CD4-positive, alpha-beta memory T cell (primary cell): ENCODE measurements at regions of chr1 and their contacts with region 1.

Region 1: GRCh38 chr1:95116580-95117206 is 462 bp upstream of the TLCD4 start:
- DNase-seq: peak; percentile 39 to 61 (median 49)
- H3K4me3 ChIP-seq: peak overlapping the region; percentile 43 to 53
- H3K4me3 Mint-ChIP-seq: peak overlapping the region; percentile 90 to 93 (median 93)
- H3K27ac ChIP-seq: no peak overlapping the region
- H3K27ac Mint-ChIP-seq: peak overlapping the region in 6 of 7 donors; percentile 51 to 88 (median 80)
- H3K4me1 ChIP-seq: peaks cover 12% of the 10 kb centered on the region
- H3K4me1 Mint-ChIP-seq: peaks cover 4 to 16% (median 9%) of the 10 kb centered on the region in 4 donors
- H3K27me3 ChIP-seq: peaks cover 18% of the 10 kb centered on the region
- H3K27me3 Mint-ChIP-seq: peaks cover 17 to 33% of the 10 kb centered on the region in 2 donors

Region 2: DNA sequence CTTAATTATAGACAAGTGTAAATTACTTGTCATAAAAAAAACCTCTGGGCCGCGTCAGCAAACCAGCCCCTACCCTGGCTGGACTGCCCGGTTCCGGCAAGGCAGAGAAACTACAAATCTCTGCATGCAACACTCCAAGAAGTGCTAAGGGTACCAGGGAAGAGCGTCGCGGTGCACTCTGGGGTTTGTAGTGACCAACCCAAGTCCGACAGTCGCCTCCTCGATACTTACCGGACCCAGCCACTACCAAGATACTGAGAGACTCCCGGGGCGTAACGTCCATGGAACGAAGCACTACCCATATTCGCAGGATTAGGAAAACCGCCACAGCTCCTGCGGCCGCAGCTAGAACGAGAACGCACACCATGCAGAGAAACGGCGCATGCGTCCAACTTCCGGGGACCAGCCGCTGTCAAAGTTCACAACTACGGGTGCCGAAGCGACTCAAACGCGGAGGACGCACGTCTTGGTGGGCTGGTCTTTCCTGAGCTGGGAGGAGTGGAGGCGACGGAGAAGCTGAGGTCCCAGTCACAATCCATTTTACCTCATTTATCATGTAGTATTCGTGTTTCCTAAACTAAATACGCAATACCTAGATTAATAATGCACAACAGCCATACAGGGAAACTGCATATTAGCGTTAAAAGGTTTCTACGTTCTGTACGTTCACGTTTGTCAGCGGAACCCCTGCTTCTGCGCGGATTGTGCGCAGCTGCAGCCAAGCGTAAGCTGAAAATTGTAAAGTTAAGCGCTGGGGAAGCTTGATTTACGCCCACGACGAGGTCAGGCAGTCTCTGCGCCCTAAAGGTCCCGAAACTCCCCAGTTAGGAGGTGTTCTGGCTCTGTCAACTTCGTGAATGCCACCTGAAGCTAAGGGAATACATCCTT is 43.9 kb before region 1 on chr1 and contains the start of gene ALG14:
- CTCF ChIA-PET with region 1: interaction called, 6 read pairs
- POLR2A ChIA-PET with region 1: interaction called, 7 read pairs
- intact Hi-C with region 1: loop called (anchors 1 kb)
- DNase-seq: peak; percentile 94 to 96 (median 95)
- H3K4me3 ChIP-seq: peak within 1 kb of the TSS; percentile 93 to 96
- H3K4me3 Mint-ChIP-seq: peak within 1 kb of the TSS; percentile 96 to 99 (median 98)
- H3K27ac ChIP-seq: peak within 1 kb of the TSS; percentile 83
- H3K27ac Mint-ChIP-seq: peak within 1 kb of the TSS; percentile 96 to 99 (median 98)
- H3K4me1 ChIP-seq: peaks cover 14% of the 10 kb centered on the region
- H3K4me1 Mint-ChIP-seq: peaks cover 12 to 21% (median 18%) of the 10 kb centered on the region in 4 donors
- H3K27me3 ChIP-seq: no peaks in the 10 kb centered on the region
- H3K27me3 Mint-ChIP-seq: peaks cover 2 to 5% of the 10 kb centered on the region in 2 donors
- total RNA-seq, gene ALG14: 1.1 to 3.2 TPM

Region 3: GRCh38 chr1:95095833-95096217 is 20.9 kb before region 1 on chr1:
- CTCF ChIA-PET with region 1: no interaction called
- POLR2A ChIA-PET with region 1: no interaction called
- intact Hi-C with region 1: no loop called
- DNase-seq: no peak
- H3K4me3 ChIP-seq: no peak overlapping the region
- H3K4me3 Mint-ChIP-seq: no peak overlapping the region
- H3K27ac ChIP-seq: no peak overlapping the region
- H3K27ac Mint-ChIP-seq: no peak overlapping the region
- H3K4me1 ChIP-seq: no peaks in the 10 kb centered on the region
- H3K4me1 Mint-ChIP-seq: no peaks in the 10 kb centered on the region
- H3K27me3 ChIP-seq: no peaks in the 10 kb centered on the region
- H3K27me3 Mint-ChIP-seq: peaks cover 4 to 9% of the 10 kb centered on the region in 2 donors